ENCODE measurements at regions of chr1 and their contacts with region 1.

Region 1: GRCh38 chr1:160837558-160838205 is 25.0 kb downstream of the CD244 start:
- DNase-seq: peak; percentile 67
- CTCF ChIP-seq: peak; percentile 13

Region 2: DNA sequence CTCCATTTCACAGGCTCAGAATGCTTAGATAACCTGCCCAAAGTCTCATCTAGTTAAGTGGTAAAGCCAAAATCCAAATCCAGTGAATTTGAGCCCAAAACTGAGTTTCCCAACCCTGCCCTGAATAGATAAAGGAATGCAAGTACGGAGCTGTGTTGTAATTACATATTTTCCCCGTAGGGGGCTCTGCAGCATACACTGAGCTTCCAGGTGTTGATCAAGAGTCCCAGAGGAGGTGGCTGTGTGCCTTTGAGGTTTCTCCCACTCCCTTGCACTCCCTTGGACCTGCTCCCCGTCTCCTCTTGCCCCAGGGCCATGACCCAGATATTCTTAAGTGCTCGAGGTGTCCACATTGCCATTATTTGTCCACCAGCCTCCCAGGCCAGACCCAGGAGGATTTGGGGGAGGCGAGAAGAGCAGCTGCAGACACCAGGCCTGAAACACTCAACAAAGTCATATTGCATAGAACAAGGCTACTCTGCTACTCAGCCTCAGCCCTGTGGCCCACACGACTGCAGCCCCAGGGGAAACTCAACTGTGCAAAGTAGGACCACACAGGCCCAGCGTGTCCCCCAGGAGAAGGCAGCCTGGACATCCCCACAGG is 60.1 kb before region 1 on chr1:
- in situ Hi-C with region 1: loop called (anchors 5 kb)
- DNase-seq: peak; percentile 52
- CTCF ChIP-seq: peak; percentile 55

Region 3: GRCh38 chr1:160951443-160952128 is 113.9 kb after region 1 on chr1:
- in situ Hi-C with region 1: loop called (anchors 5 kb)
- DNase-seq: peak; percentile 83
- CTCF ChIP-seq: peak; percentile 79

Measured in GM13976 (cell line).